Right ventricle myocardium inferior (tissue), 1 donor: ENCODE measurements at regions of chr3 and their contacts with region 1.

Region 1: GRCh38 chr3:196518966-196519717 is 4.0 kb upstream of the SMCO1 start:
- DNase-seq: no peak
- ATAC-seq: peak; percentile 43

Region 2: DNA sequence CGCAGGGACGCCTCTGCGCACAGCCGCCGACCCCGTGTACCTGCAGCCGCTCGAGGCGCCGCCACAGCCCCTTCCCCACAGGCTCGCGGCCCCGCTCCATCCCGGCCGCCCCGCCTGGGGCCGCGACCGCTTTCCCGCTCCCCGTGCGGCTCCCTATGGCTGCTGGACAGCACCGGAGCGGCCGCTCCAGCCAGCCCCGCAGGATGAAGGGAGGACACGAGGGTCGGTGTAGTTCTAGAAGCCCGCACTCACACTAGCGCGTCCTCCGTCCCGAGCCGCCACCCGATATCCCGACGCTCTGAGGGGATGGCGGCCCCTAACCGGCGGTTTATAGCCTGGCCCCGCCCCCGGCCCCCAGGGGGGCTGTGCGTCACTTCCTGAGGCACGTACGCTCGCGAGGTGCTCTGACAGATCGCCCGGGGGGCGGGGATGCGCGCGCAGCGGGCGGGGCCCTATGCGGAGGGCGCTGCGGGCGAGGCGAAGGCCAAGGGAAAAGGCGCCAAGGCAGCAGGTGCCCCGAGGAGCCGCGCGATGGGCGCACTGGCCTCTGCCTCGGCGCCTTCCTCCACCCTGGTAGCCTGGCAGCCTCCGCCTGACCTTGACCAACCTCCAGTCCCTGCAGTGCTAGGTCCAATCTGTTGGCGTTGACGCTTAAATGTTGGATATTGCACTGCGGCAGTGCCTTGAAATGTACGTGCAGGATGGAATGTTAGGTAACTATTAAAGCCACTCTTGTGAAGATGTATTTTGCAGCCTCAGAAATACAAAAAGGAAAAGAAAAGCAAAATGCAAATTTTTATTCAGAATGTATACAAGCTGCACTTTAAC is 437.1 kb before region 1 on chr3 and contains the start of gene TFRC:
- intact Hi-C with region 1: loop called (anchors 5 kb)
- DNase-seq: peak; percentile 98
- ATAC-seq: peak; percentile 99
- total RNA-seq, gene TFRC: 91.8 TPM

Region 3: DNA sequence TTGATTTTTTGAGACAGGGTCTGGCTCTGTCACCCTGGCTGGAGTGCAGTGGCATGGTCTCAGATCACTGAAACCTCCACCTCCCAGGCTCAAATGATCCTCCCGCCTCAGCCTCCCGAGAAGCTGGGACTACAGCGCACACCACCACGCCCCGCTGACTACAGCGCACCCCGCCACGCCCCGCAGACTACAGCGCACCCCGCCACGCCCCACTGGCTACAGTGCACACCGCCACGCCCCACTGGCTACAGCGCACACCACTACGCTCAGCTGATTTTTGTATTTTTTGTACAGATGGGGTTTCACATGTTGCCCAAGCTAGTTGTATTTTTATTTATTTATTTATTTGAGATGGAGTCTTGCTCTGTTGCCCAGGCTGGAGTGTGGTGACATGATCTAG is 267.2 kb before region 1 on chr3:
- intact Hi-C with region 1: loop called (anchors 5 kb)
- DNase-seq: no peak
- ATAC-seq: no peak

Region 4: GRCh38 chr3:196486263-196486662 is 32.9 kb before region 1 on chr3:
- intact Hi-C with region 1: loop called (anchors 2 kb)
- DNase-seq: no peak
- ATAC-seq: no peak